ENCODE measurements at regions of chr13 and their contacts with region 1.

Region 1: DNA sequence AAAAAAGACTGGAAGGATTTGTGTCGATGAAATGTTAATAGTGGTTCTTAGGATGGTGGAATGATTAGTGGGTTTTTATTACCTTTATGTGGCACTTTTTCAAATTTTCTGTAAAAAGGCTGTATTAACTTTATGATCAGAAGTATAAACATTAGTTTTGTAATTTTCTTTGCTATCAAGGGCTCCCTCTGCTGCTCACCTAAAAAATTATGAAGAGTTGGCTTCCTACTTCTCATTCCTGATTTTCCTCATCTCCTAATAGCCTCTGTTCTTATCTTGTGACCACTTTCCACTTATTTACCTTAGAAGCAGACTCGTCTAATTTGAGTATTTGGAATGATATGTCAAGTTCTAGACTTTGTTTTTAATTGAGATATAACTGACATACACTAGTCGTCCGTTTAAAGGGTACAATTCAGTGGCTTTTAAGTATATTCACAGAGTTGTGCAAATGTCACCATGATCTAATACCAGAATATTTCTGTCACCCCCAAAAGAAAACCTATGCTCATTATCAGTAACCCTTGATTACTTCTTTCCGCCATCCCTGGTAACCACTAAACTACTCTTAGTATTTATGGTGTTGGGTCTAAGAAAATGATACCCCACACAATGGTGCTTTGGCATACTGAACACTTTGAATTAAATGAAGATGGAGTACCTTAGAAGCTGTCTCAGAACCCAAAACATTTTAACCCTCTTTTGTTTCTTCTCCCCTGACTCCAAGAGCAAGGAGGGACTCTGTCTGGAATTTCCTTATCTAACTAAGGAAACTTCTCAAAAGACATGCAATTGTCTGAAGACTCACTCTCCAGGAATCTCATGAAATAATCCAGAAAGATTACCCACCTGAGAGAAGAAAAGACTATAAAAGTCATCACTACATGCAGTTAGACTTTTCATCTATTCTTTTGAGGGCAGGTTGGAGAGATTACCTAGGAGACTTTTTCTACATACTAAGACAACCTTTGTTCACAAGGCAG is 311.3 kb downstream of the DLEU7 start:
- DNase-seq: peak; percentile 42
- H3K4me3 ChIP-seq: no peak overlapping the region
- H3K27ac ChIP-seq: no peak overlapping the region
- H3K4me1 ChIP-seq: no peaks in the 10 kb centered on the region
- H3K27me3 ChIP-seq: no peaks in the 10 kb centered on the region
- CTCF ChIP-seq: peak; percentile 61

Region 2: GRCh38 chr13:49996951-49997895 is 535.0 kb before region 1 on chr13 and contains the start of gene TRIM13:
- CTCF ChIA-PET with region 1: no interaction called
- POLR2A ChIA-PET with region 1: no interaction called
- intact Hi-C with region 1: loop called (anchors 5 kb)
- DNase-seq: peak; percentile 92
- H3K4me3 ChIP-seq: peak within 1 kb of the TSS; percentile 98
- H3K27ac ChIP-seq: peak within 1 kb of the TSS; percentile 98
- H3K4me1 ChIP-seq: peaks cover 23% of the 10 kb centered on the region
- H3K27me3 ChIP-seq: no peaks in the 10 kb centered on the region
- CTCF ChIP-seq: peak; percentile 93
- total RNA-seq, gene TRIM13: 36.9 and 38.7 TPM in 2 replicates

Region 3: DNA sequence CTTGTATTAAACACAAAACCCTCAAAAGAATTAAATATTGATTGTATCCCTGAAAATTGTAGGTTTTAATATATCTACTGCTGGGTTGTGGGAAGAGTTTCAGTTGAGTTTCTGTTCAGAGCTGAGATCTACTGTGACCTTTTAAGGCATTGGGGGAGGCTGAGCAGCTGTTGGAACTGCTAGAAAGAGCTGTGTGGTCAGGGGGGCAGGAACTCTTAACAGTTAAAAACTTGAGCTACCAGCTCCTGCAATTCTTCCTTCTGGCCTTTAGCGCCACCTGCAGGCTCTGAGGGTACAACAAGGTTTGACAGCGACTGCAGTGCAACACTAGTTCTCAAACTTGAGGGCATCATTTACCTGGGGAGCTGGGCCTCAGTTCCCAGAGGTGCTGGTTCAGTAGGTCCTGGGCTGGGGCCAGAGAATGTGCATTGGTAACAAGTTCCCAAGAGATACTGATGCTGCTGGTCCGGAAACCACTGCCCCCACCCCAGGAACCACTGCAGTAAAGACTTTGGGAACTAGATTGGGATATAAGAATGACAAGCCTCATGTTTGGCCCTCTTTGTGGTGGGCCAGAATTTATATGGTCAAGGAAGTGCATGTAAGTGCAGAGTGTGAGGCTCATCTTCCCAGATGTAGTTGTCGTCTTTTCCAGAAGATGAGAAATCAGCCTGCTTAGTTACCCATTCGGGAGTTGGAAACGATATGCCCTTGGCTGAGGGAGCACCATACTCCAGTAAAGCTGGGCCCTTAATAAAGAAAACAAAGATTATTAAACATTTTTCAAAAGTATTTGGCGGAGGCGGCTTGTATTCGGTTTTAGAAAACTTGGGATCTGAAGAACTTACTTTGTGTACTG is 380.0 kb after region 1 on chr13:
- CTCF ChIA-PET with region 1: no interaction called
- POLR2A ChIA-PET with region 1: no interaction called
- intact Hi-C with region 1: loop called (anchors 5 kb)
- DNase-seq: peak; percentile 89
- H3K4me3 ChIP-seq: peak overlapping the region; percentile 70
- H3K27ac ChIP-seq: no peak overlapping the region
- H3K4me1 ChIP-seq: peaks cover 18% of the 10 kb centered on the region
- H3K27me3 ChIP-seq: no peaks in the 10 kb centered on the region
- CTCF ChIP-seq: peak; percentile 92

Measured in A673 (cell line).